PC-9 (cell line): ENCODE measurements at regions of chr1 and their contacts with region 1.

Region 1: GRCh38 chr1:108125312-108126138 is 74.6 kb downstream of the SLC25A24 start:
- DNase-seq: peak; percentile 59 to 71
- H3K4me3 ChIP-seq: no peak overlapping the region
- H3K27ac ChIP-seq: no peak overlapping the region
- H3K4me1 ChIP-seq: peaks cover 11% of the 10 kb centered on the region
- H3K27me3 ChIP-seq: no peaks in the 10 kb centered on the region
- CTCF ChIP-seq: peak; percentile 99

Region 2: GRCh38 chr1:107782217-107782845 is 343.2 kb before region 1 on chr1:
- CTCF ChIA-PET with region 1: interaction called, 27 read pairs
- POLR2A ChIA-PET with region 1: interaction called, 3 read pairs
- intact Hi-C with region 1: loop called (anchors 1 kb)
- DNase-seq: peak; percentile 11 to 46
- H3K4me3 ChIP-seq: no peak overlapping the region
- H3K27ac ChIP-seq: no peak overlapping the region
- H3K4me1 ChIP-seq: peaks cover 10% of the 10 kb centered on the region
- H3K27me3 ChIP-seq: no peaks in the 10 kb centered on the region
- CTCF ChIP-seq: peak; percentile 99

Region 3: GRCh38 chr1:107936498-107937481 is 188.7 kb before region 1 on chr1:
- CTCF ChIA-PET with region 1: no interaction called
- POLR2A ChIA-PET with region 1: no interaction called
- intact Hi-C with region 1: no loop called
- DNase-seq: peak; percentile 83 to 100
- H3K4me3 ChIP-seq: peak overlapping the region; percentile 18; the same call in 1 of the 2 replicates
- H3K27ac ChIP-seq: peak overlapping the region; percentile 76
- H3K4me1 ChIP-seq: peaks cover 34% of the 10 kb centered on the region
- H3K27me3 ChIP-seq: no peaks in the 10 kb centered on the region
- CTCF ChIP-seq: no peak

Region 4: GRCh38 chr1:107963601-107964335 is 161.8 kb before region 1 on chr1:
- CTCF ChIA-PET with region 1: no interaction called
- POLR2A ChIA-PET with region 1: no interaction called
- intact Hi-C with region 1: loop called (anchors 10 kb)
- DNase-seq: no peak
- H3K4me3 ChIP-seq: no peak overlapping the region
- H3K27ac ChIP-seq: no peak overlapping the region
- H3K4me1 ChIP-seq: peaks cover 11% of the 10 kb centered on the region
- H3K27me3 ChIP-seq: no peaks in the 10 kb centered on the region
- CTCF ChIP-seq: no peak

Region 5: DNA sequence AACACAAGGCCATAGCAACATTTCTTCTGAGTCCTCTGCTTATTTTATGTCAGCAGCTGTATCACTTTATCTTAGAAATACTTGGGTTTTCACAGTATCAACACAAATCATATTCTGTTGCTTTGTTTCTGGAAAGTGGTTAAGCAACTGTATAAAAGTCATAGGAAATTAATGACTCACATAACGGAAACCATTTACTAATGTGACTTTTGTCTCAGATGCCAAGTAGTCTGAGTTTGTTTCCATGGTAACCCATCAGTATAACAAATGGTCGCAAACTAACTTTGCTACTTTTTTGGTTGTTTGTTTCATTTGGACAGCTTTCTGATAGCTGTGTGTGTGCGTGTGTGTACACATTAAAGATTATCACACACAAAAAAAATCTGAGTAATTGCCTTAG is 465.4 kb after region 1 on chr1:
- CTCF ChIA-PET with region 1: interaction called, 12 read pairs
- POLR2A ChIA-PET with region 1: no interaction called
- intact Hi-C with region 1: no loop called
- DNase-seq: peak in 1 of 2 experiments; percentile 76
- H3K4me3 ChIP-seq: no peak overlapping the region
- H3K27ac ChIP-seq: no peak overlapping the region
- H3K4me1 ChIP-seq: peaks cover 12% of the 10 kb centered on the region
- H3K27me3 ChIP-seq: no peaks in the 10 kb centered on the region
- CTCF ChIP-seq: no peak

Region 6: DNA sequence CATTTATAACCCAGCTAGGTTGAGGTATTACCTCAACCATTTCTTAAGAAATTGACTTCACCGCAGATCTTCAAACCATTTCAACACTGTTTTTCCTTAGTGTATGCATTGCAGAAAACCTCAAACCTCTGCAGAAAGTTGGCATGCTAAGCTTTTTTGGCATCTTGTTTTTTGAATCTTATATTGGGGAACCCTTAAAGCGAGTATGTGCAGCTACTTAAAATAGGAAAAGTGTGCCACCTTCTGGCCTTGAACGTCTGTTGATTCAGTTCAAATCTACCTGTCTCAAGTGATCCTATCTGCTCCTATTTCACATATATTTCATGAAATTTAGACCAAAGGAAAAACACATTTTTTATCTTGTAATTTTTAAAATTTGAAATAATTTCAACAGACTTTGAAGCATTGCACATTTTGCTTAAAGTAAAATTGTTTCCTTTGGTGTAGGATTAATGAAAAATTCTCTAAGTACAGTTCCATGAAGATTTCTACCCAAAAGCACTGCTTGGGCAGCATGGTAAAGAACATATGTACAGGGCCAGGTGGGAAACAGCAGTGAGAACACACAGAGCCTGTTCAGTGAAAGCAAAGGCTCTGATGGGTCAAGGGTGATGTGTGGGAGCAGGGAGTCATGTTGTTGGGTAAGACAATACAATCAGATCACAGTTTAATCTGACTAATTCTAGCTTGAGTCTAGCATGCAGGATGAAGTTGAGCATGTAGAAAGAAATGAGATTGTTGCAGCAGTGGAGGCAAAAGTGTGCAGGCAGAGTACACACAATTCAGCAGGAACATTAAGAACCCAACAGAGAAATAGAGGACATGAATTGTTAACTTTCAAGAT is 518.2 kb after region 1 on chr1:
- CTCF ChIA-PET with region 1: no interaction called
- POLR2A ChIA-PET with region 1: no interaction called
- intact Hi-C with region 1: loop called (anchors 10 kb)
- DNase-seq: peak; percentile 23 to 69
- H3K4me3 ChIP-seq: no peak overlapping the region
- H3K27ac ChIP-seq: no peak overlapping the region
- H3K4me1 ChIP-seq: peaks cover 11% of the 10 kb centered on the region
- H3K27me3 ChIP-seq: no peaks in the 10 kb centered on the region
- CTCF ChIP-seq: peak; percentile 82

Region 7: DNA sequence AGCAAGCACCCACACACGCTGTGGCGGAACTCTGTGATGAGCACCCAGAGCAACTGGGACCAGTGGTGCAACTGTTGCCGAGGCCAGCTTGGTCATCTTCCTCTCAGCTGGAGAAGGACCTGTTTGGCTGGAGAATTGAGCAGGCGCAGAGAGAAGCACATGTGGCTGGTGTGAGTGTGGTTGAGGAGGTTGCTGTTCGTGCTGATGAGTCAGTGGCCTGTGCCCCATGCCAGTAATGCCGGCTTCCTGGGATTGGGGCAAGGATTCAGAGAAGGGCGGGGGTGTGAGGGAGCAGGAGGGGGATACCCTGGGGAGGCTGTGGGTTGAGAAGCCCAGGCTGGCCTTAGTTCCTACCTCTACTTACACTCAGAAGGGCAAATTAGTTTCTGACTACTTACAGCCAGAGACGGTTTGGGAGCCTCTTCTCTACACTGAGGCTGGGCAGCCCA is 1695.7 kb after region 1 on chr1:
- CTCF ChIA-PET with region 1: no interaction called
- POLR2A ChIA-PET with region 1: no interaction called
- intact Hi-C with region 1: no loop called
- DNase-seq: peak; percentile 88 to 97
- H3K4me3 ChIP-seq: no peak overlapping the region
- H3K27ac ChIP-seq: peak overlapping the region; percentile 85
- H3K4me1 ChIP-seq: peaks cover 61% of the 10 kb centered on the region
- H3K27me3 ChIP-seq: no peaks in the 10 kb centered on the region
- CTCF ChIP-seq: no peak